ENCODE measurements at regions of chr5 and their contacts with region 1.

Region 1: GRCh38 chr5:149561848-149562247 is 10.6 kb upstream of the CSNK1A1 start:
- DNase-seq: peak in 1 of 4 donors; percentile 17
- ATAC-seq: peak; percentile 54
- H3K4me3 ChIP-seq: no peak overlapping the region
- H3K27ac ChIP-seq: peak overlapping the region in 1 of 4 donors; percentile 42
- H3K4me1 ChIP-seq: no peaks in the 10 kb centered on the region
- H3K27me3 ChIP-seq: no peaks in the 10 kb centered on the region
- CTCF ChIP-seq: no peak
- POLR2A ChIP-seq: no peak

Region 2: GRCh38 chr5:149387081-149387631 is 174.7 kb before region 1 on chr5:
- intact Hi-C with region 1: loop called (anchors 5 kb)
- DNase-seq: no peak
- ATAC-seq: no peak
- H3K4me3 ChIP-seq: no peak overlapping the region
- H3K27ac ChIP-seq: no peak overlapping the region
- H3K4me1 ChIP-seq: no peaks in the 10 kb centered on the region
- H3K27me3 ChIP-seq: no peaks in the 10 kb centered on the region
- CTCF ChIP-seq: no peak
- POLR2A ChIP-seq: no peak

Region 3: DNA sequence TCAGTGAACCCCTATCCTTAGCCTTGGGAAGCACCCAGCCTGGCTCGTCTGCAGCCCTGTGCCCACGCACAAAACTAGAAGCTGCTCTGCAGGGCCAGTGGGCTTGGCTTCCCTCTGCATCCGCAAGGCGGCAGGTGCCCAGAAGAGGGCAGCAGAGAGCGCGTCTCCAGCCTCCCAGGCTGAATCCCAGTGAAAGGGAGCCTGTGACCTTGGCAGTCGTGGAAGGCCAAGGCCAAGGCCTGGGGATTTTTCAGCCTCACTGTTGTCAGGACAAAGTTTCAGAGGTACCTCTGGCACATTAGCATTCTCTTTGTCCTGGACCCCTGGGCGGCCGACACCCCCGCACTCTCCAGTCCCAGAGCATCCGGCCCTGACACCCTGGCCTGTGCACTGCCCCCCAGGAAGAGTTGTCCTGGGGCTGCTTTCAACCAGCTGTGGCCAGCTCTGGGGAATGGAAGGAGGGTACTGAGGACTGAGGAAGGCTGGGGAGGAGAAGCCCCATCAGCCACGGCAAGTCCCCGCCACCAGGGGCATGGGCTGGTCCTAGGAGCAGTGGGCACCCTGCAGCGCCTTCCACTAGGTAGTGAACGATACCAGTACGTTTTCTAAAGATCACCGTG is 119.2 kb before region 1 on chr5:
- intact Hi-C with region 1: loop called (anchors 5 kb)
- DNase-seq: peak; percentile 81 to 89 (median 85)
- ATAC-seq: peak; percentile 86
- H3K4me3 ChIP-seq: no peak overlapping the region
- H3K27ac ChIP-seq: peak overlapping the region in 3 of 4 donors; percentile 16 to 62 (median 57)
- H3K4me1 ChIP-seq: peaks cover 7% of the 10 kb centered on the region
- H3K27me3 ChIP-seq: no peaks in the 10 kb centered on the region
- CTCF ChIP-seq: peak; percentile 85 to 95 (median 93)
- POLR2A ChIP-seq: no peak

Region 4: DNA sequence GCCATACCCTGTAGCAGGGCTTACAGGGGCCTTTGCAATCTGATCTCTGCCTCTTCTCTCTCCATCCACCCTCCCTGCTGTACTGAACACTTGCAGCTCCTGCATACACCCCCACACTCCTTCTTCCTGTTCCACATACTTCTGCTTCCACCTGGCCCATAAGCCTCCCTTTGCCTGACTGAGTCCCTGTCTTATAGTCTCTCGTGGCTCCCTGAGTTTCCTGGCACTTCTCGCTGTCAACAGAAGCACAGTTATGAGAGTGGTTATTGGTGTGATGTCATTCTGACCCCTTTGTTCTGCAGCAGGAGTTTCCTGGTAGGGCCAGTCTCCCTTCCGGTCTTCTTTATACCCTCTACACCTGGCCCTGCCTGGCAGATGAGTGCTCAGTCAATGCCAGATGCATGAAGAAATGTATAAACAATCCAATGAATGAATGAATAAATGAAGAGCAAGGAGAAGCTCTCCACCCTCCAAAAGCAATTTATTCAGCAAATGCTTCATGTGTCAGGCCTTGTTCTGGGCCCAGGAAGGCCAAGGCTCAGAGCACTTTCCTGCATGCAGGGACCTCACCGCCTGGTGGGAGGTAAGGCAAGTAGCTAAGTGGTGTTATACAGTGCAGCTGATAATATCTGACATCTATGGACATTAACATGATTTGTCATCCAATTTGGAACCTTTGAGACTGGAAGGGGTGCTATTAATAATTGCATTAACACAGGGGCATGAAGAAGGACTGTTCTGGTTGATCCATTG is 545.0 kb after region 1 on chr5:
- intact Hi-C with region 1: no loop called
- DNase-seq: no peak
- ATAC-seq: no peak
- H3K4me3 ChIP-seq: no peak overlapping the region
- H3K27ac ChIP-seq: no peak overlapping the region
- H3K4me1 ChIP-seq: no peaks in the 10 kb centered on the region
- H3K27me3 ChIP-seq: no peaks in the 10 kb centered on the region
- CTCF ChIP-seq: no peak
- POLR2A ChIP-seq: no peak